ENCODE measurements at regions of chr11 and their contacts with region 1.

Region 1: GRCh38 chr11:17635551-17635938 is 83.8 kb upstream of the MYOD1 start:
- DNase-seq: no peak
- H3K4me3 ChIP-seq: no peak overlapping the region
- H3K27ac ChIP-seq: no peak overlapping the region
- H3K4me1 ChIP-seq: no peaks in the 10 kb centered on the region
- H3K27me3 ChIP-seq: no peaks in the 10 kb centered on the region
- CTCF ChIP-seq: peak; percentile 47 to 56 (median 53)
- EP300 ChIP-seq: no peak
- POLR2A ChIP-seq: no peak
- RAD21 ChIP-seq: peak; percentile 24 to 36; a peak in 2 of 4 replicates

Region 2: DNA sequence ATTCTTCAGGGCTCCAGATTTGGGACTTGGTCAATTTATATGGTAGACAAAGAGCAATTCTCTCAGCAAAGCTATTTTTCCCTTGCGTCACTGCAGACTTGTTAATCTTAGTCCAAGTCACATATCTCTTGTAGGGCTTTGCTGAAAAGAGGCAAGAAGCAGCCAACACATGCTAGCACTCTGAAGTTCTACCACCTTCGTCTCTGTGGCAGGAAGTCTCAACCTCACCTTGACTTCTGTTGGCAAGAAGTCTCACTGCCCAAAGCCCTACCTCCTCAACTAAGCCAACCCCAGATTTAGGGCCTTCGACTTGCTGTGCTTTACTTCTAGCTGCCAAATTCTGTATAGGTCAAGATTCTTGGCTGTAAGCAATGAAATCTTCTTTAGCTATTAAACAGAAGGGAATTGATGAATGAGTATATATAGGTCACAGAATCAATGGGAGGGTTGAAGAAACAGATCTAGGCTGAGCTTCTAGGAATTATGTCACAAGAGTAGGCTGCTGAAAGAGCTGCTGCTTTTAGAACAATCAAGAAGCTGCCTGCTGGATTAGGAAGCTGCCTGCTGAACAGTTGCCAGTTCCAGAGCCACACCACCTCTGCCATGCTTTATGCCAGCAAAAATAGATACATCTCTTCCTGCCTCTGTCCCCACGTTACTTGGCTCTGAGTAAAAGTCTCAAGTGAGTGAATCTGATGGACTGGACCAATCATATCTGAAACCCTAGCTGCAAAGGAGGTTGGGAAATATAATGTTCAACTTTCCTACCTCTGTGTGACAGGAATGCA is 301.6 kb before region 1 on chr11:
- CTCF ChIA-PET with region 1: no interaction called
- POLR2A ChIA-PET with region 1: no interaction called
- DNase-seq: no peak
- H3K4me3 ChIP-seq: no peak overlapping the region
- H3K27ac ChIP-seq: no peak overlapping the region
- H3K4me1 ChIP-seq: peaks cover 0 to 2% (median 0%) of the 10 kb centered on the region in 4 experiments; a peak in 1 of 7 replicates
- H3K27me3 ChIP-seq: no peaks in the 10 kb centered on the region
- CTCF ChIP-seq: no peak
- EP300 ChIP-seq: no peak
- POLR2A ChIP-seq: no peak
- RAD21 ChIP-seq: no peak

Region 3: DNA sequence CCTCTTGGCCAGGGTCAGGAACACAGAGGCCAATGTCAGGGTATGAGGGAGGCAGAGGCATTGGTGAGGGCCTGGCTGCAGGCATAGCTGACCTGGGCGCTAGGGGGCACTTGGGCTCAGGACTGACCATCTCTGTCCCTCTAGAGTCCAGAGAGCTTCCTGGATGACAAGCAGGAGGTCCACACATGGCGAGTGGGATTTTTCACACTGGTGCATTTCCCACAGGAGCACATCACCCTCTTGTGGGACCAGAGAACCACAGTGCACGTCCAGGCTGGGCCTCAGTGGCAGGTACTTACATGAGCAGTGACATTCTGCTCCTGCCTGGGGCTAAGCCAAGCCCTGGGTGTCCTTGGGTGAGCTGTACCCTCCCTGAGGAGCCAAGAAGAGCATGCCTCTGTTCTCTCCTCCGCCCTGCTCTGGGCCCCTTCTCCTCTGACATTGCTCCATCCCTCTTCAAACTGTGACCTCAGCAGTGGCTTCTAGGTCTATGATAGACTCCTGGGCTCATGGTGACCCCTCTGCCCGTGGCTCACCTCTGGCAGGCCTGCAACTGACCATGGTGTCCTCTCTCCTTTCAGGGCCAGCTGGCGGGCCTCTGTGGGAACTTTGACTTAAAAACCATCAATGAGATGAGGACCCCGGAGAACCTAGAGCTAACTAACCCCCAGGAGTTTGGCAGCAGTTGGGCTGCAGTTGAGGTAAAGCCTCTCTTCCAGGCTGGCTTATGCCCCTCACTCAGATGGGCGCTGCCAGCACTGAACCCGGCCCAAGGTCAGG is 41.9 kb before region 1 on chr11:
- CTCF ChIA-PET with region 1: interaction called, 16 read pairs
- POLR2A ChIA-PET with region 1: no interaction called
- DNase-seq: peak in 1 of 2 experiments; percentile 30
- H3K4me3 ChIP-seq: no peak overlapping the region
- H3K27ac ChIP-seq: no peak overlapping the region
- H3K4me1 ChIP-seq: no peaks in the 10 kb centered on the region
- H3K27me3 ChIP-seq: no peaks in the 10 kb centered on the region; a peak in 1 of 7 replicates
- CTCF ChIP-seq: peak in 1 of 3 experiments; percentile 20; a peak in 1 of 4 replicates
- EP300 ChIP-seq: no peak
- POLR2A ChIP-seq: no peak
- RAD21 ChIP-seq: no peak

Region 4: GRCh38 chr11:17650127-17650911 is 14.8 kb after region 1 on chr11:
- CTCF ChIA-PET with region 1: interaction called, 43 read pairs
- POLR2A ChIA-PET with region 1: no interaction called
- DNase-seq: no peak
- H3K4me3 ChIP-seq: no peak overlapping the region
- H3K27ac ChIP-seq: no peak overlapping the region
- H3K4me1 ChIP-seq: peaks cover 3 to 9% (median 7%) of the 10 kb centered on the region in 4 experiments; a peak in 6 of 7 replicates
- H3K27me3 ChIP-seq: peaks cover 0 to 9% (median 3%) of the 10 kb centered on the region in 4 experiments; a peak in 3 of 7 replicates
- CTCF ChIP-seq: no peak
- EP300 ChIP-seq: no peak
- POLR2A ChIP-seq: no peak
- RAD21 ChIP-seq: no peak

Region 5: GRCh38 chr11:17722000-17722643 is 86.6 kb after region 1 on chr11:
- CTCF ChIA-PET with region 1: interaction called, 34 read pairs
- POLR2A ChIA-PET with region 1: no interaction called
- DNase-seq: peak in 1 of 2 experiments; percentile 65
- H3K4me3 ChIP-seq: peak overlapping the region in 1 of 4 experiments; percentile 56; a peak in 2 of 8 replicates
- H3K27ac ChIP-seq: no peak overlapping the region
- H3K4me1 ChIP-seq: peaks cover 0 to 31% (median 14%) of the 10 kb centered on the region in 4 experiments; a peak in 6 of 7 replicates
- H3K27me3 ChIP-seq: peaks cover 52 to 72% (median 60%) of the 10 kb centered on the region in 4 experiments
- CTCF ChIP-seq: peak; percentile 76 to 90 (median 77)
- EP300 ChIP-seq: no peak
- POLR2A ChIP-seq: no peak
- RAD21 ChIP-seq: peak; percentile 62 to 72

Measured in H1 (cell line).